Activated CD4-positive, alpha-beta T cell treated with anti-CD3 and anti-CD28 coated beads for 36 hours (primary cell): ENCODE measurements at regions of chrX and their contacts with region 1.

Region 1: DNA sequence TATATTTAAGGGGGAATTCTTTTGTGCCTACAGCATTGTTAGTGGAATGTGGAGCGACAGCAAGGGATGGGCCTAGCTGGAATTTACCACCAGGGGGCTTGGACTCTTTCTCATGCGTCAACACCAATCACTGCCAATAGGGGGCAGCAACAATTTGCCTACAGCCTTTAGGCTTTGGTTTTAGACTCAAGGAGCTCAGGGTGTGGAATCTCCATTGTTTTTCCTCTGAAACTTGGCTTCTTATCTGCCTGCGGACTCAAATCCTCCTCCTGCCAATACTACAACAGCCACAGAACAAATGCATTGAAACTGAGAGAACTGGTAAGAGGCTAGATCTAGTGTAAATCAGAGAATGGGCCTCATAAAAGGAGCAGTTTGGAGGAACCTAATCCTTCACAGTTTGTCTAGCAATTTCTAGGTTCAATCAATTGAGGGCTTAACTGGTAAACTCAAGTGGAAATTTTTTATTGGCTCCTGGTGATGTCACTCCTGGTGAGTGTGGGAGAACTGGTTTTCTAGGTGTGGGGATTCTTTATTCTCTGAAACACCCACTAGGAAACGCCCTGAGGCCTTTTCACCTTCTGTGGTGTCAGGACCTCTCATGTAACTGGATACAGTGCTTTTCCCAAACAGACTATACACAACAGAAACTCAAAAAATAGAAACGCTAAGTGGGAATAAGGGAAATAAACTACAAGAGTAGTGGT is 27.9 kb upstream of the TMSB4X start:
- DNase-seq: peak; percentile 81
- ATAC-seq: peak; percentile 11
- H3K4me3 Mint-ChIP-seq: peak overlapping the region; percentile 38
- H3K27ac Mint-ChIP-seq: peak overlapping the region; percentile 94
- H3K4me1 Mint-ChIP-seq: peaks cover 54% of the 10 kb centered on the region
- H3K27me3 Mint-ChIP-seq: no peaks in the 10 kb centered on the region

Region 2: DNA sequence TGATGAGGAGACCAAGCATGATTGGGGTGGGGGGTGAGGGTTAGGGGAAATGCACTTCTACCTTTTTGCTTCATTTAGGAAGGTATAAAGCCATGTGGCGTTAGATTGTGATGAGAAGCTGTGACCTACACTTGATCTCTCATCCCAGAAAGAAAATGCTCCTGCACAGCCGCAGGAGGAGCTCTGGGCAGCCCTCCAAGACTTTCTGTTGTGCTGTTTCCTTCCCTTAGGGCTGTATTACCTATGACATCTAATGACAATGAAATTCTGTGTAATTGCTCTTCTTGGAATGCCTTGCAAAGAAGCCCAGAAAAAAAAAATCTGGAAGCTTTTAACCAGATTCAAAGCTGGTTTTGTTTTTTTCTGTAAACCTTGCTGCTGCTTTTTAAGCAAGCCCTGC is 142.3 kb before region 1 on chrX:
- CTCF ChIA-PET with region 1: no interaction called
- POLR2A ChIA-PET with region 1: no interaction called
- intact Hi-C with region 1: no loop called
- DNase-seq: no peak
- ATAC-seq: no peak
- H3K4me3 Mint-ChIP-seq: no peak overlapping the region
- H3K27ac Mint-ChIP-seq: no peak overlapping the region
- H3K4me1 Mint-ChIP-seq: peaks cover 17% of the 10 kb centered on the region
- H3K27me3 Mint-ChIP-seq: no peaks in the 10 kb centered on the region

Region 3: DNA sequence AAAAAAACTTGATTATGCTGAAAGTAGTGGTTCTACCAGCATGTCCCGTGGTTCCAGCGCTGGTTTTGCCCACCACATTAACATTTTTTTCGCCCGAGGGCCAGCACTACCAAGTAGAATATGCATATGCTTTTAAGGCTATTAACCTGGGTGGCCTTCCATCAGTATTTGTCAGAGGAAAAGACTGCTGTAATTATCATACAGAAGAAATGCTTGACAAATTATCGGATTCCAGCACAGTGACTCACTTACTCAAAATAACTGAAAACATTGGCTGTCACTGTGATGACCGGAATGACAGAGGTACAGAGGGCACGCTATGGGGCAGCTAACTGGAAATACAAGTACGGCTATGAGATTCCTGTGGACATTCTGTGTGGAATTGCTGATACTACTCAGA is 121.2 kb before region 1 on chrX:
- CTCF ChIA-PET with region 1: no interaction called
- POLR2A ChIA-PET with region 1: no interaction called
- intact Hi-C with region 1: no loop called
- DNase-seq: no peak
- ATAC-seq: no peak
- H3K4me3 Mint-ChIP-seq: no peak overlapping the region
- H3K27ac Mint-ChIP-seq: no peak overlapping the region
- H3K4me1 Mint-ChIP-seq: no peaks in the 10 kb centered on the region
- H3K27me3 Mint-ChIP-seq: no peaks in the 10 kb centered on the region

Region 4: GRCh38 chrX:12974796-12975669 is 28.0 kb after region 1 on chrX and contains the start of gene TMSB4X:
- CTCF ChIA-PET with region 1: interaction called, 29 read pairs
- POLR2A ChIA-PET with region 1: interaction called, 19 read pairs
- intact Hi-C with region 1: loop called (anchors 1 to 2 kb)
- DNase-seq: peak; percentile 91
- ATAC-seq: peak; percentile 52
- H3K4me3 Mint-ChIP-seq: peak within 1 kb of the TSS; percentile 90
- H3K27ac Mint-ChIP-seq: peak within 1 kb of the TSS; percentile 96
- H3K4me1 Mint-ChIP-seq: peaks cover 24% of the 10 kb centered on the region
- H3K27me3 Mint-ChIP-seq: no peaks in the 10 kb centered on the region
- total RNA-seq, gene TMSB4X: 3,666 to 4,468 TPM

Region 5: DNA sequence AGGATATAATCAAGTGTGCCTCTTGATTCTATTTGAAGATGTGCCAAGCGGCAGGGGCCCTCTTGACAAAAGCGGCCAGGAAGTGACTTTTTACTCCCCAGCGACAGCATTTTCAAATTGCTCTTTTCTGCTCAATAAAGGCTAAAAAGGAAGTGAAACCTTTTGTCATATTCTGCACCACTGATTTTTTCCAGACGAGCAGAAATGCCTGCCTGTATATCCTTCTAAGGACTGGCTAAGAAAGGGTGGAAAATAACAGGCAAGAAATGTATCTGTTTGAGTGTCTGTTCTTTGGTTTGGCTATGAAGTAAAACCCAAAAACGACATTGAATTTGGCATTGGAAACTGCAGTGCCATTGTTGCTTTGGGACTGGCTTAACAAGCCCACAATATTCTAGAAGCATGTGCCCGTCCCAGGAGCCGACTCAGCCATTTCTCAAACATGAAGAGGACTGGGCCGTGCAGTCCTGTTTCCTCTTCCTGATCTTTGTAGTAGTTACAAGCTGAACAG is 53.4 kb after region 1 on chrX:
- CTCF ChIA-PET with region 1: interaction called, 16 read pairs
- POLR2A ChIA-PET with region 1: interaction called, 5 read pairs
- intact Hi-C with region 1: loop called (anchors 1 kb)
- DNase-seq: peak; percentile 61
- ATAC-seq: peak; percentile 38
- H3K4me3 Mint-ChIP-seq: peak overlapping the region; percentile 66
- H3K27ac Mint-ChIP-seq: peak overlapping the region; percentile 94
- H3K4me1 Mint-ChIP-seq: peaks cover 70% of the 10 kb centered on the region
- H3K27me3 Mint-ChIP-seq: no peaks in the 10 kb centered on the region

Region 6: GRCh38 chrX:13094828-13095341 is 147.9 kb after region 1 on chrX:
- CTCF ChIA-PET with region 1: interaction called, 28 read pairs
- POLR2A ChIA-PET with region 1: interaction called, 11 read pairs
- intact Hi-C with region 1: loop called (anchors 1 to 2 kb)
- DNase-seq: no peak
- ATAC-seq: no peak
- H3K4me3 Mint-ChIP-seq: no peak overlapping the region
- H3K27ac Mint-ChIP-seq: peak overlapping the region; percentile 70
- H3K4me1 Mint-ChIP-seq: peaks cover 79% of the 10 kb centered on the region
- H3K27me3 Mint-ChIP-seq: no peaks in the 10 kb centered on the region

Region 7: DNA sequence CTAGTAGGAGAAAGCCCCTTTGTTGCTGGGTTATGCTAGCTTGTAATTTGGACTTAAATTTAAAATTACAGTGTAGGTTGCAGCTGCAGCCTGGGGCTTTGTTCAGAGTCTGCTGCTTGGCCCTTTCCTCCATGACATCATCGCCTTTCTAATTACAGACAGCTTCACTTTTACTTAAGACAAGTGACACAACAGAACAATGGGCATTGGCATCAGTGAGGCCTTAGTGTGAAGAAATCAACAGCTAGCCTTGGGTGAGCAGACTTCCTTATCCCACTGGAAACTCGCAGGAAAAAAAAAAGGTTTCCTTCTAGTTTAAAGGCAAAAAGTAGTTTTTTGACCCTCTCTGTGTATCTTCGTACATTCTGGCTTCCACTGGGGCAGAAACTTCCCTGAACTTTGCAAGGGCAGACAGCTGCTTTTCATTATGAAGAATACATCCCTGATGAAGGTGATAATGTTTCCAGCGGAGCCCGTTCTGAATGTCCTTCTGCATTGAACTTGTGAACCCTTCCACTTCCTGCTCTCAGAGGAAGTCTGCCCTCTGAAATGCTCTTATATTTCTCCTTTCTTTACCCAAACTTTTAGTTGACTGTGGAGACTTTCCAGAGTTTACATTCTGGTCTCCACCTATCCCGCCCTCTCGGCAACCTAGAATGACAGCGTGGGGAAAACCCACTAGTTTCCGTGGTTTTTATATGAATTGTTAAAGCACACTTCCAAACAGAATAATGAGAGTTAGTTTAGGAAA is 220.7 kb after region 1 on chrX:
- CTCF ChIA-PET with region 1: interaction called, 4 read pairs
- POLR2A ChIA-PET with region 1: no interaction called
- intact Hi-C with region 1: loop called (anchors 2 to 5 kb)
- DNase-seq: peak; percentile 35
- ATAC-seq: peak; percentile 72
- H3K4me3 Mint-ChIP-seq: peak overlapping the region; percentile 34
- H3K27ac Mint-ChIP-seq: peak overlapping the region; percentile 60
- H3K4me1 Mint-ChIP-seq: peaks cover 20% of the 10 kb centered on the region
- H3K27me3 Mint-ChIP-seq: no peaks in the 10 kb centered on the region

Region 8: GRCh38 chrX:13254076-13254785 is 307.2 kb after region 1 on chrX:
- CTCF ChIA-PET with region 1: interaction called, 5 read pairs
- POLR2A ChIA-PET with region 1: no interaction called
- intact Hi-C with region 1: loop called in 1 of 2 experiments (anchors 5 kb)
- DNase-seq: peak; percentile 17
- ATAC-seq: peak; percentile 42
- H3K4me3 Mint-ChIP-seq: no peak overlapping the region
- H3K27ac Mint-ChIP-seq: no peak overlapping the region
- H3K4me1 Mint-ChIP-seq: peaks cover 46% of the 10 kb centered on the region
- H3K27me3 Mint-ChIP-seq: no peaks in the 10 kb centered on the region

Region 9: GRCh38 chrX:13653022-13653693 is 706.2 kb after region 1 on chrX and contains the start of gene TCEANC:
- CTCF ChIA-PET with region 1: interaction called, 3 read pairs
- POLR2A ChIA-PET with region 1: no interaction called
- intact Hi-C with region 1: loop called (anchors 2 to 5 kb)
- DNase-seq: peak; percentile 96
- ATAC-seq: peak; percentile 96
- H3K4me3 Mint-ChIP-seq: peak within 1 kb of the TSS; percentile 81
- H3K27ac Mint-ChIP-seq: peak within 1 kb of the TSS; percentile 90
- H3K4me1 Mint-ChIP-seq: peaks cover 12% of the 10 kb centered on the region
- H3K27me3 Mint-ChIP-seq: no peaks in the 10 kb centered on the region
- total RNA-seq, gene TCEANC: 1.9 to 2.3 TPM